GM12878 (cell line): ENCODE measurements at regions of chr1 and their contacts with region 1.

Region 1: DNA sequence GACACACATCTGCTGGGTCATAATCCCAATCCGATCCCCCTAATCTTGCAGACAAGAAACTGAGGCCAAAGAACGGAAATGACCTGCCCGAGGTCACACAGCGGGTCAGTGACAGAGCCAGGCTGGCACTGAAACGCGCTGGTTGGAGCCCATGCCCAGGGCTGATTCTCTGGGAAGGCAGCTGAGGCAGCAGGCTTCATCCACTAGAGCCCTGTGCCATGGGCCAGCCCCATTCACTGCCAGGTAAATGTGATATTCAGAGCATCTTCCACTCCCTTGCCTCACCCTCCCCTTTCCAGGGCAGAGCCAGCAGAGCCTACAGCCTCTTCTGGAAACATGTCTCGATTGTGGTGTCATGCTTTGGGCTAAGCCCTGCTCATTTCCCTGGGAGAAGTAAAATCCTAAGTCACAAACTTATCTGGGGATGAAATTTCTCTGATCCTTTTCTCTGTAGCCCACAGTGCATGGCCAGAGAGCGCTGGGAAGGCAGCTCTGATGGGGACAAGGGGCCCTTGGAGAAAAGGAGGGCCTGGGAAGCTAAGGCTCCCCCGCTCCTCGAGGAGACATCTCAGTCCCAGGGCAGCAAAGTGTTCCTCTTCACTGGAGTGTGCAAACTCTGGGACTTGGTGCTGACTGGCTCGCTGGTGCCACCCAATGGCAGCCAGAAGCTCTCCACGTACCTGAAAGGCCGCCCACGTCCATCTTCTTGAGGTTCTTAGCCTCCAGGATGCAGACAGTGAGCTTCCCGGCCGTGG is 110.4 kb downstream of the SYT2 start:
- DNase-seq: no peak
- ATAC-seq: peak; percentile 95
- H3K4me3 ChIP-seq: no peak overlapping the region
- H3K27ac ChIP-seq: no peak overlapping the region
- H3K4me1 ChIP-seq: peaks cover 3% of the 10 kb centered on the region
- H3K27me3 ChIP-seq: no peaks in the 10 kb centered on the region; a peak in 3 of 4 replicates
- CTCF ChIP-seq: peak; percentile 79 to 86 (median 81)
- EP300 ChIP-seq: no peak
- POLR2A ChIP-seq: no peak
- RAD21 ChIP-seq: peak; percentile 79

Region 2: GRCh38 chr1:202501281-202501680 is 98.6 kb before region 1 on chr1:
- CTCF ChIA-PET with region 1: interaction called, 15 read pairs
- POLR2A ChIA-PET with region 1: no interaction called
- RAD21 ChIA-PET with region 1: interaction called, 7 read pairs
- SMC1A ChIA-PET with region 1: interaction called, 5 read pairs
- in situ Hi-C with region 1: no loop called
- intact Hi-C with region 1: loop called (anchors 2 kb)
- DNase-seq: no peak
- ATAC-seq: peak; percentile 76
- H3K4me3 ChIP-seq: no peak overlapping the region
- H3K27ac ChIP-seq: no peak overlapping the region
- H3K4me1 ChIP-seq: no peaks in the 10 kb centered on the region
- H3K27me3 ChIP-seq: no peaks in the 10 kb centered on the region
- CTCF ChIP-seq: peak; percentile 26 to 50 (median 34); a peak in 5 of 6 replicates
- EP300 ChIP-seq: no peak
- POLR2A ChIP-seq: no peak
- RAD21 ChIP-seq: peak; percentile 77

Region 3: DNA sequence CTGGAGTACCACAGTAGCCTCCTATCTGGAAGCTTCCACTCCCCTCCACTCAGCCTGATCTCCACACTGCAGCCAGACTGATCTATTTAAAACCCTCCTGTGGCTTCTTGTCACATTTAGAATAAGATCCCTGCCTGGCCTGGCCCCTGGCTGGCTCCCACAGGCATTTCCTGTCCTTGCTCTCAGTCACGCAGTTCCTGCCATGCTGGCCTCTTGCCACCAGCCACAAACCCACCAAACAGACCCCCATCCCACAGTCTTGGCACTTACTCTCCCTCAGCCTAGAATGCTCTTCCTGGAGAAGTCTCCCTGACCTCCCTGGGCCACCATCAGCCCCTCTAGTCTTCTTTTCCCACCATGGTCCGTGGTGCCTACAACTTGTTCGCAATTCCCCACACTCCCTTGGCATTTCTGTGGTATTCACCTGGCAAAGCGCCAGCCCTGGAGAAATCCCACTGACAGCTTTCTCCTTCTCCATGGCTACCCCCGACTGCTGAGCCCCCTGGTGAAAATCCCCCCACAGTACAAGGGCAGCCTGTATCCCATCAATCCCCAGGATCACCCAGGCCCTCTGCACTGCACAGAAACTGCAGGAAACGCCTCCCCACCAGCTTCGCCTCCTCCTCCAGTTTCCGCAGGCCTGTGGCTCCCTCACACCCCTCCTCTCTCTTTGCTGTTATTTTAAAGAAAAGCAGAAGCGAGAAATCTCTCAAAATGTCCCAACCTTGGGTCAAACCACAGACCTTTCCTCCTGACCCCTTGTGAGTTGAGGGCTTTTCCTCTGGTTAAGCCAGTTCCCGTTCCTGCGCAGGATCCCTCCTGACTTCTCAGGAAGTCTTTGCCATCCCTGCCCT is 15.9 kb after region 1 on chr1:
- CTCF ChIA-PET with region 1: interaction called, 18 read pairs
- POLR2A ChIA-PET with region 1: no interaction called
- RAD21 ChIA-PET with region 1: interaction called, 3 read pairs
- SMC1A ChIA-PET with region 1: no interaction called
- in situ Hi-C with region 1: no loop called
- intact Hi-C with region 1: no loop called
- DNase-seq: peak; percentile 70
- ATAC-seq: peak; percentile 85
- H3K4me3 ChIP-seq: peak overlapping the region; percentile 42; the same call in 1 of the 2 replicates
- H3K27ac ChIP-seq: peak overlapping the region; percentile 72
- H3K4me1 ChIP-seq: peaks cover 40% of the 10 kb centered on the region
- H3K27me3 ChIP-seq: no peaks in the 10 kb centered on the region
- CTCF ChIP-seq: no peak
- EP300 ChIP-seq: peak; percentile 62 to 75; a peak in 3 of 4 replicates
- POLR2A ChIP-seq: no peak
- RAD21 ChIP-seq: no peak

Region 4: DNA sequence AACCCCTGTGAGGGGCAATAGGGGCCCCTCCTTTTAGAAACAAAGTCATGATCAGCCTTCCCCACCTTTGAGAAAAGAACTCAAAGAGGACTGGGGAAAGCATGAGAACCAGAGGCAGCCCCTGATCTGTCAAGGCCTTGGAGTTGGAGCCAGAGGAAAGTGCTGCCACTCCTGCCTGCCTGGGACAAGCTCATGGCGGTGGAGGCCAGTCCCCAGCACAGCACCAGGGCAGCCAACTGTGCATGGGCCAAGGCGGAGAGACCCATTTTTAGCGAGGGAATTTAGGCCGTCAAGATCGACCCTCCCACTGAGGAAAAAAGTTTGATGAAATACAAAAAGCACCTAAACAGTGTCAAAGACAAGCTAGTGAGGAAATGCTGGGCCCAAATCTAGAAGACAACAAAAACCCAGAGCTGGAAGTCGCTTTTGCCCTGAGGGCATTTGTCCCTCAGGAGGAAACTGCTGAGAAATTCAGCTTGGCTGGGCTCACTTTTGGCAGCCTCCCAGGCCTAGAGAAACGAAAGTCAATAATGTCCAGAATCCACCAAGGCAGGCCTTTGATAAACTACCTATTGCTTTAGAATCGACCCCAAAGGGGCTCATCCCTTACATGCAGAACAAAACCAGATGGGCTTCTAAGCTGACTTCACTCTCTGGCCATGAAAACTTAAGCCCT is 71.4 kb after region 1 on chr1:
- CTCF ChIA-PET with region 1: no interaction called
- POLR2A ChIA-PET with region 1: no interaction called
- RAD21 ChIA-PET with region 1: no interaction called
- SMC1A ChIA-PET with region 1: no interaction called
- in situ Hi-C with region 1: no loop called
- intact Hi-C with region 1: no loop called
- DNase-seq: no peak
- ATAC-seq: no peak
- H3K4me3 ChIP-seq: no peak overlapping the region
- H3K27ac ChIP-seq: no peak overlapping the region
- H3K4me1 ChIP-seq: no peaks in the 10 kb centered on the region
- H3K27me3 ChIP-seq: peaks cover 0 to 3% of the 10 kb centered on the region in 2 experiments; a peak in 2 of 4 replicates
- CTCF ChIP-seq: no peak
- EP300 ChIP-seq: no peak
- POLR2A ChIP-seq: no peak
- RAD21 ChIP-seq: no peak